Heart left ventricle (tissue), 16 donors: ENCODE measurements at regions of chr11 and their contacts with region 1.

Region 1: GRCh38 chr11:17978553-17979287 is 34.1 kb downstream of the SERGEF start:
- DNase-seq: peak; percentile 16 to 64 (median 45)
- ATAC-seq: peak; percentile 49 to 86 (median 80)
- H3K4me3 ChIP-seq: no peak overlapping the region
- H3K27ac ChIP-seq: no peak overlapping the region
- H3K4me1 ChIP-seq: peaks cover 0 to 10% (median 3%) of the 10 kb centered on the region in 12 donors
- H3K27me3 ChIP-seq: no peaks in the 10 kb centered on the region
- CTCF ChIP-seq: peak; percentile 51 to 84 (median 68)
- POLR2A ChIP-seq: no peak

Region 2: DNA sequence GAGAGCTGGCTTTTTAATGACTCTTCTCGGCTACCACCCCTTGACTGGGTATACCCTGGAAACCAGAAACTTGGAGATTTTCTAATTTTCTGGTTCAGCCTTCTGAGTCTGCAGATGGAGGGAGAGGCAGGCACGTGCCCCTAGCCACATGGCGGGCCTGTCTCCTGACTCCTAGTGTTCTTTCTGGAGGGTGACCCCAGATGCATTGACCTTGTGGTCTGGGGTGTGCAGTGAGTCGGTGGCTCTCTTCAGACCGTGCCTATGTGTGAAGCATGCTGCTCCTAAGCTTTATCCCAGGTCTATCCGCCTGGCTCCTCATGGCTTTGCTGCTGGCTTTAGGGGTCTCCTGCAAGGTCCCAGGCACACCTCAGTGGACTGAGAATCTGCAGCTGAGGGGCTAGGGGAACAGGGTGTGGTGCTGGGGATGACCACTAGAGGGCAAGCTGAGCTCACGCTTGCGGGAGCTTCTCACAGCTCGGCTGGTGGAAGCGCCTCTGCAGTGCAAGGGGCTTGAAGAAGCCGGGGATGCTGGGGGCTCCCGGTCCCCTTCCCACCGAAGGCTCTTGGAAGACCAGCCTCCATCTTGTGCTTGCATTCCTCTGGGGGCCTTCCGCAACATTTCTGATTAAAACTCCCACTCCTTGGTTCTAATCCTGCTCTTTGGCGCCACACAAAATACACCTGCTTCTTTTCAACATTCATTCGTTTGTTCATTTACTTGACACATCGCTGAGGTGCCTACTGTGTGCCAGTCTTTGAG is 379.8 kb before region 1 on chr11:
- intact Hi-C with region 1: loop called (anchors 2 to 5 kb)
- DNase-seq: peak; percentile 51 to 77 (median 67)
- ATAC-seq: peak; percentile 37 to 90 (median 78)
- H3K4me3 ChIP-seq: no peak overlapping the region
- H3K27ac ChIP-seq: no peak overlapping the region
- H3K4me1 ChIP-seq: no peaks in the 10 kb centered on the region
- H3K27me3 ChIP-seq: peaks cover 0 to 13% (median 0%) of the 10 kb centered on the region in 9 donors
- CTCF ChIP-seq: peak; percentile 78 to 94 (median 90)
- POLR2A ChIP-seq: no peak

Region 3: GRCh38 chr11:17730608-17731462 is 247.9 kb before region 1 on chr11:
- intact Hi-C with region 1: loop called (anchors 1 to 5 kb)
- DNase-seq: peak; percentile 77 to 85 (median 84)
- ATAC-seq: peak; percentile 90 to 94 (median 92)
- H3K4me3 ChIP-seq: no peak overlapping the region
- H3K27ac ChIP-seq: no peak overlapping the region
- H3K4me1 ChIP-seq: peaks cover 2 to 20% (median 7%) of the 10 kb centered on the region in 12 donors
- H3K27me3 ChIP-seq: peaks cover 2 to 44% (median 11%) of the 10 kb centered on the region in 9 donors
- CTCF ChIP-seq: peak; percentile 73 to 91 (median 86)
- POLR2A ChIP-seq: no peak

Region 4: DNA sequence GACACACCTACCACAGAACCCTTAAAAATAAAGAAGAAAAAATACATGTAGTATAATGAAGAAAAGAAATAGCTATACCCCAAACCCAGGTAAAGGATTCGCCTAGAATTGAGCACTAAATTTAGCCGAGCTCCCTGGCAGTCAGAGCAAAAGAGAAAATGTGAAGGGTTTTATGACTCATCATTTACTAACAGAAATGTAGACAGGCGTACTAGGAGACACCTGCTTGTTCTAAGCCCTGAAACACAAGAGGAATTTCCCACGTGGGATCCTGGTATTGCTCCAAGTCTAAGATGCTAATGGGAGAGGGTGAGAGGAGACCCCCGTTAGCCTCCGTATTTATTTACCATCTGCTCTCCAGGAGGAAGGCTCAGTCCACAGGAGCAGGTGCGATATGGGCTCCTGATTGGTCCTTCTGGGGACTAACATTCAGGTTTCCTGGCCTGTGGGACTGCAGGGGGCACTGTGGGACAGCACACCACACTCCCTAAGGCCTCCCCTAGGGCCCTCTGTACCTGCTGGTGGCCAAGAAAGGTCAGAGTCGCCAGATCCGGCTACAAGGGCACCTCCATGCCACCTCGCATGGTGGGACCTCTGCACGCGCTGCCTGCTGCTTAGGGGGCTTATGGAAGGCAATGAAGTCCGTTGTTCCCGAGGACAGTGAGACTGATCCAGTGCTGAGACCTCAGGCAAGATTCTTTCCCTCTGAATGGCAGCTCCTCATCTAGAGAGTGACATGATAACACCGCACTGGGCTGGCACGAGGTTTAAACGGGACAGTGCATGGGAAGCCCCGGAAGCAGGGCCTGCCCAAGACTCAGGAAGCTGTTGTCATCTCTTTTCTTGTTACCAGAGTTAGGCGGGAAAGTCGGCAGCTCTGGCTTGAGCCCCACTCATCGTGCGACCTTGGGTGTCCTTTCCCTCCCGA is 218.4 kb before region 1 on chr11:
- intact Hi-C with region 1: loop called in 9 of 10 experiments (anchors 1 to 5 kb)
- DNase-seq: peak in 4 of 5 donors; percentile 30 to 63 (median 52)
- ATAC-seq: peak; percentile 67 to 93 (median 86)
- H3K4me3 ChIP-seq: no peak overlapping the region
- H3K27ac ChIP-seq: no peak overlapping the region
- H3K4me1 ChIP-seq: peaks cover 0 to 5% (median 0%) of the 10 kb centered on the region in 12 donors
- H3K27me3 ChIP-seq: no peaks in the 10 kb centered on the region
- CTCF ChIP-seq: peak; percentile 39 to 73 (median 62)
- POLR2A ChIP-seq: no peak

Region 5: DNA sequence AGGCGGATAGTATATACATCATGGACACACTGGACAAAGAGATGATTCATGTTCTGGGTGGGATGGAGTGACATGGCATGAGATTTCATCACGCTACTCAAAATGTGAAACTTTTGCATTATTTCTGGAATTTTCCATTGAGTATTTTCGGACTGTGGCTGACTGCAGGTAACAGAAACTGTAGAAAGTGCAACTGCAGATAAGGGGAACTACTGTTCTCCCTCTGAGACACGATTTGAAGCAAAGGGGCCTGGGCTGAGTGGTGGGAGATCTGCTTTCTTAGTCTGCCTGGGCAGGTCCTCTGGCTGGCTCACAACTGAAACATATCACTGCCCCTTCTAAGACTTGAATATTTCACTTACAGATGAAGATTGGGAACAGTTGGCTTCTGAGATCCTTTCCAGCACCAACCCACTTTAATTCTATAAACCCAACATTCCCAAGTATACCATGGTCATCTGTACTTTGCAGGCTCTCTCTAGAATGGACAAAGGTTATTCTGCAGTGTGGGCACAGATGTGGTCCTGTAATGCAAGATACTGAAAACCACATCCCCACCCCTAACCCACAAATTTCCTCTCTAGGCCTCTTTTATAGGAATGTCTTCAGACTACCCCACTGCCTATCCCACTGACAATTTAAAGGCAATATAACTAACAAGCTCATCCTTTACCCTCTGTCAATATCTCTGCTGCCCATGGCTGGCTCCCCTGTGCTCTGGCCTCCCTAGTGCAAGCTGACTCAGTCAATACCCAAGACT is 123.0 kb before region 1 on chr11:
- intact Hi-C with region 1: loop called in 1 of 10 experiments (anchors 10 kb)
- DNase-seq: no peak
- ATAC-seq: no peak
- H3K4me3 ChIP-seq: no peak overlapping the region
- H3K27ac ChIP-seq: no peak overlapping the region
- H3K4me1 ChIP-seq: peaks cover 0 to 7% (median 0%) of the 10 kb centered on the region in 12 donors
- H3K27me3 ChIP-seq: no peaks in the 10 kb centered on the region
- CTCF ChIP-seq: no peak
- POLR2A ChIP-seq: no peak

Region 6: GRCh38 chr11:18036456-18036855 is 57.7 kb after region 1 on chr11:
- intact Hi-C with region 1: no loop called
- DNase-seq: no peak
- ATAC-seq: no peak
- H3K4me3 ChIP-seq: no peak overlapping the region
- H3K27ac ChIP-seq: no peak overlapping the region
- H3K4me1 ChIP-seq: no peaks in the 10 kb centered on the region
- H3K27me3 ChIP-seq: no peaks in the 10 kb centered on the region
- CTCF ChIP-seq: no peak
- POLR2A ChIP-seq: no peak